ENCODE measurements at regions of chr9 and their contacts with region 1.

Region 1: DNA sequence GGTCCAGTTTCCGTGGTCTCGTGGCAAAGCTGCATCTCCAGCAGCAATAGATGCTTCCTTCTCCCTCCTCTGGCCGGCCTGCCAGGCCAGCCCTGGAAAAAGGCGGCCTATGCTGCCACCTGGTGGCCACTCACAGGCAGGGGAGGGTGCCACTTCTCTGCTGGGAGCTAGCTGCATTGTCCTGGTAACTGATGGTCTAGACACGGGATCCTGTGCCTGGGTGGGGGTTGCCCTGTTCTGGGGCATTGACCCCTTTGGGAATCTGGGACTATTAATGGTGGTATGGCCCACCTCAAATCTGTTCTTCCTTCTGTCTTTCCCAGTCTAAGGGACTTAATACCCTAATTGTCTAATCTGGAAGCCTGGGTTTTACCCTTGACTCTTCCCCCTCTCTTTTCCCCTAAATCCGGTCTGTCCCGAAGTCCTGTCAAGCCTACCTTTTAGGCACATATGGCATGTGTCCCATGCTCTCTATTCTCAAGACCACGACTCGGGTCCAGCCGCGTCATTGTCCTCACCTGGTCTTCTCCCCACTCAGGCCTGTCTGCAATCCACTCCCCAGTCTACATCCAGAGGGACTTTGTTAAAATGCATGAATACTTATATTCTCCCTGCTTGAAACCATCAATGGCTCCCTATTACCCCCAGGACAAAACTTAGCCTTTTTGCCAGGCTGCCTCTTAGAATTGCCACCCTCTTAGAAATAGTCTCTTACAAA is 20.0 kb upstream of the PTGS1 start:
- DNase-seq: peak; percentile 71 to 84 (median 82)
- H3K4me3 ChIP-seq: no peak overlapping the region
- H3K27ac ChIP-seq: no peak overlapping the region
- H3K4me1 ChIP-seq: peaks cover 0 to 41% (median 30%) of the 10 kb centered on the region in 4 experiments
- H3K27me3 ChIP-seq: no peaks in the 10 kb centered on the region

Region 2: DNA sequence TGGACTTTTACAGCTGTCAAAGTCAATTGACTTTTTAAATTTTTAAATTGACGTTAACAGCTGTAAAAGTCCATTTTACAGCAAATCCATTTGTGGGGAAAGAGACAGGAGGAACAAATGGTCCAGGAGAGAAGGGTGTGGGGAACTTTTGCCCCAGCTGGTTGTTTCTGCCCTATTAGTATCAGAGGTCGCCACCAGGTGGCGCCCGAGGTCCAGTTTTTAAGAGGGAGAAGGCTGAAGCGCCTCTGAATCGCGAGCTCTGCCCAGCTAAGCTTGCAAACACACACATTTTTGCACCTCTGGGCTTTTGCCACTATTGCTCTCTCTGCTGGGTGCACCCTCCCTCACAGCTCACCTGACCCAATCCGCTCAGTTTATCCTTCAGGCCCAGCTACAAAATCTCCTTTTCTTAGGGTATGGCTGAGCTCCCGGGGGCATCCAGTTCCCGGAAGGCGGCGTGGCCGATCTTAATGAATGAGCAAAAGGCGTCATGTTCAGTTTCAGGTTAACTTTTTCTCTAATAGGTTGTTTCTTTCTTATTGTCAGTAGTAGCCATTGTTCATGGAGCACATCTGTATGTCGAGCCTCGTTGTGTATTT is 251.4 kb before region 1 on chr9:
- CTCF ChIA-PET with region 1: interaction called, 30 read pairs
- POLR2A ChIA-PET with region 1: no interaction called
- DNase-seq: peak; percentile 71 to 87 (median 81)
- H3K4me3 ChIP-seq: peak overlapping the region in 2 of 7 experiments; percentile 33 to 35
- H3K27ac ChIP-seq: no peak overlapping the region
- H3K4me1 ChIP-seq: peaks cover 0 to 9% (median 4%) of the 10 kb centered on the region in 4 experiments
- H3K27me3 ChIP-seq: peaks cover 0 to 5% (median 0%) of the 10 kb centered on the region in 5 experiments

Region 3: DNA sequence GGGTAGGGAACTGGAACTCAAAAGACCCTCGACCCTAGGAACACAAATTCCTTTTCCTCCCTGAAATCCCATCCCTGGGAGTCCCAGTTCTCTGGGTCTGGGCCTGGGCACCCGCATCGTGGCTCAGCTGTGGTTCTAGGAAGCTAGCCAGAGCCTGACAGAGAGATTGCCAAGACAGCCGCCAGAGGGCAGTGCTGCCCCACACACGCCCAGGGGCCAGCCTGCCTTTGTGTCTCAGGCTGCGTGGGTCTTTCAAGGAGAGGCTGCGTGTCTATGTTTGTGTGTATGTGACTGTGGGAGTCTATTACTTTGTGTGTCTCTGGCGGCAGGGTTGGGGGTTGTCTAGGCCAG is 225.7 kb before region 1 on chr9:
- CTCF ChIA-PET with region 1: interaction called, 277 read pairs
- POLR2A ChIA-PET with region 1: interaction called, 3 read pairs
- DNase-seq: peak; percentile 74 to 86 (median 81)
- H3K4me3 ChIP-seq: no peak overlapping the region
- H3K27ac ChIP-seq: no peak overlapping the region
- H3K4me1 ChIP-seq: peaks cover 0 to 28% (median 16%) of the 10 kb centered on the region in 4 experiments
- H3K27me3 ChIP-seq: peaks cover 0 to 19% (median 6%) of the 10 kb centered on the region in 5 experiments

Region 4: DNA sequence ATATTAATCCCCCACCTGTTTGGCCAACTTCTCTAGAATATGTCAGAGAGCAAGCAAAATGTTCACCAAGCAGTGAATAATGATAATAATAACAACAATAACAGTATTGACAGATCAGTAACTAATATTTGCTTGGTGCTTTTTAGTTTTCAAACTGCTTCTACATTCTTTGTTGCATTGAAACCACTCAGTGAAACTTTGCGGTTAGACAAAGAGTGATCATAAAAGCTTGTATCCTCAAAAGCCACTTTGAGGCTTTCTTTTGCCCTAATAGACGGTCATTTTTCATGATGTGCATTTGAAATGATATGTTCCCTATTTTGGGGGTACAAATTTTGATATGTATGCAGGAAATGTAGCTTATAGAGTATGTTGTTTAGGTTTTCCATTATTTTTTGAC is 23.6 kb before region 1 on chr9:
- CTCF ChIA-PET with region 1: interaction called, 10 read pairs
- POLR2A ChIA-PET with region 1: no interaction called
- DNase-seq: no peak
- H3K4me3 ChIP-seq: no peak overlapping the region
- H3K27ac ChIP-seq: no peak overlapping the region
- H3K4me1 ChIP-seq: peaks cover 0 to 32% (median 22%) of the 10 kb centered on the region in 4 experiments
- H3K27me3 ChIP-seq: no peaks in the 10 kb centered on the region

Region 5: DNA sequence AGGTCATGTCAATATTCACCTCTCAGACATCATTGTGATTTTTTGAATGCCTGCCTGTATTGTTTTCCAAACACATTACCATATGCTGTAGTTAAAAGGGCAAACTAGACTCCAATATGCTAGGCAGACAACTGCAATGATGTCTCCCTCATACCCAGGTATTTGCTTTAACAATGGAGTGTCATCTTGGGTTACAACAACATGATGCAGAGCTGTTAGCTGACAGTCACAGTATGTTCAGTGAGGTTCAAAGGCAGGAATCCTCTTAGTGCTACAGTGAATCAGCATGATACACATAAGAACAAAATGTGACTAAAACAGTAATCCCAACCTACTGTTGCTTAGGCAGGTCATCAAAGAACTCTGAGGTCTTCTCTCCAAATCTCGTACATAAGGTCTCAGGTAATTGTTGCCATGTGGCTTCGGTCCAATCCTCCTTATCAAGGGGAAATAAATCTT is 102.9 kb after region 1 on chr9:
- CTCF ChIA-PET with region 1: interaction called, 13 read pairs
- POLR2A ChIA-PET with region 1: no interaction called
- DNase-seq: no peak
- H3K4me3 ChIP-seq: no peak overlapping the region
- H3K27ac ChIP-seq: no peak overlapping the region
- H3K4me1 ChIP-seq: no peaks in the 10 kb centered on the region
- H3K27me3 ChIP-seq: no peaks in the 10 kb centered on the region